ENCODE measurements at regions of chr2 and their contacts with region 1.

Region 1: DNA sequence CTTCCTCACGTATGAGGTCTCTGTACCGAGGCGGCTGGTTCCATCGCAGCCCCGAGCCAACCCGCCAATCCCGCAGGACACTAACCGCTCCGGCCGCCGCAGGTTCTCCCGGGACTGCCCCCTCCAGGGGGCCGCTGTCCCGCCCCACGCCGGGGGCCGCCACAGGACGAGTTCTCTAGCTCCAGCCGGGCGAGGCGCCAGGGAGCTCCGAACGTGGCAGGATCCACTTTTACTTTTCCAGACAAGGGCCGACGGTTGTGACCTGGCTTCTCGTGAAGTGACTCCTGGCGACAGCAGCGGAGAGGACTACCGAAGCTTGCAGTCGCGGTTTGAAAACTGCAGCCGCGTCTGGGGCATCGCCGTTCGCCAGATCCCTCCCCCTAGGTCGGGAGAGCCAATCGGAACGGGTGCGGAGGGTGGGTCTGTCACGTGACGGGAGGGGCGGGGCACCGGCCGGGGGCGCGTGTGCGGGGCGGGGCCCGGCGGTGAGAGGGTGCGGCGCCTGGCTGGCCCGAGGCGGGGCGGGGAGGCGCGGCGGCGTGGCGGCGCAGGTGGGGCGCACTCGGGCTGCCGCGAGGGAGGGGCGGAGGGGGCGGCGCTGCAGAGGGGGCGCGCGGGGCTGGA is at the start of gene STK17B:
- DNase-seq: peak; percentile 78 to 96
- H3K4me3 ChIP-seq: peak within 1 kb of the TSS; percentile 80 to 90
- H3K27ac ChIP-seq: peak within 1 kb of the TSS; percentile 82 to 85
- H3K4me1 ChIP-seq: no peaks in the 10 kb centered on the region
- H3K27me3 ChIP-seq: no peaks in the 10 kb centered on the region
- CTCF ChIP-seq: peak in 1 of 3 experiments; percentile 11
- total RNA-seq, gene STK17B: 8.4 TPM

Region 2: DNA sequence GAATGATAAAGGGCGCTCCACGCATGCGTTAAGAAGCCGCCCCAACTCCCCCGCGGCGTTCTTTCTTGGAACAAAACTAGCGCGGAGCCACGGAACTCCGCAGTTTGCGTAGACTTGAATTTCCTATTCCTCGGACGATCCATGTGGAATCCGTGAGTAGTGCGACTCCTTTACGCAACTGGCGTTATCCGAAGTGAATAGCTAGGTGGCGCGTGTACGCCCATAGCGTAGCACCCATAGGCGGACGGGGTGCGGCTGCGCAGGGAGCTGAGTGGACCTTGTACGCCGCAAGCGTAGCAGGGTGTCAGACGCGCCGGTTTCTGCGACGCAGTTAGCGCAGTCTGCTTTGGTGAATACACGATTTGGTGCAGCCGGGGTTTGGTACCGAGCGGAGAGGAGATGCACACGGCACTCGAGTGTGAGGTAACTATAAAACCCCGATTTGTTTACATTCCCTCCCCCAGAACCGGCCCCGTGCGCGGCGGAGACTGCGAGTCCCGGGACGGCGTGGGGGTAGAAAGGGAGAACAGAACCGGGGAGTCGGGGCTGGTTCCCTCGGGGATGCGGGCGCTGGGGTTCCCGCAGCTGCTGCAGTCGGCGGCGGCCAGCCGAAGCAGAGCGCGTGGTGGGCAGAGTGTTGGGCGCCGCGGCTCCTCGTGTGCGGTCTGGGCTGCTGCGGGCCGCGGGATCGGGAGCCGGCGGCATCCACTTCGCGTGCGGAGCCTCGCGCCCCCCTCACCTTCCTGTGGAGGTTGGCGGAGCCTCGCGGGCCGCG is 514.3 kb before region 1 on chr2 and contains the start of gene SLC39A10:
- intact Hi-C with region 1: loop called (anchors 5 kb)
- DNase-seq: peak; percentile 94 to 99
- H3K4me3 ChIP-seq: peak within 1 kb of the TSS; percentile 83 to 89
- H3K27ac ChIP-seq: peak within 1 kb of the TSS; percentile 97 to 98
- H3K4me1 ChIP-seq: peaks cover 0 to 9% of the 10 kb centered on the region in 2 donors
- H3K27me3 ChIP-seq: no peaks in the 10 kb centered on the region
- CTCF ChIP-seq: peak in 1 of 3 experiments; percentile 4
- total RNA-seq, gene SLC39A10: 9.9 TPM

Region 3: GRCh38 chr2:196068271-196069209 is 102.8 kb before region 1 on chr2 and contains the start of gene DNAH7:
- intact Hi-C with region 1: loop called (anchors 2 kb)
- DNase-seq: peak; percentile 59 to 92
- H3K4me3 ChIP-seq: peak within 1 kb of the TSS; percentile 73 to 88
- H3K27ac ChIP-seq: peak within 1 kb of the TSS; percentile 23 to 68
- H3K4me1 ChIP-seq: peaks cover 2 to 3% of the 10 kb centered on the region in 2 donors
- H3K27me3 ChIP-seq: no peaks in the 10 kb centered on the region
- CTCF ChIP-seq: peak in 1 of 3 experiments; percentile 69
- total RNA-seq, gene DNAH7: 0.21 TPM

Region 4: DNA sequence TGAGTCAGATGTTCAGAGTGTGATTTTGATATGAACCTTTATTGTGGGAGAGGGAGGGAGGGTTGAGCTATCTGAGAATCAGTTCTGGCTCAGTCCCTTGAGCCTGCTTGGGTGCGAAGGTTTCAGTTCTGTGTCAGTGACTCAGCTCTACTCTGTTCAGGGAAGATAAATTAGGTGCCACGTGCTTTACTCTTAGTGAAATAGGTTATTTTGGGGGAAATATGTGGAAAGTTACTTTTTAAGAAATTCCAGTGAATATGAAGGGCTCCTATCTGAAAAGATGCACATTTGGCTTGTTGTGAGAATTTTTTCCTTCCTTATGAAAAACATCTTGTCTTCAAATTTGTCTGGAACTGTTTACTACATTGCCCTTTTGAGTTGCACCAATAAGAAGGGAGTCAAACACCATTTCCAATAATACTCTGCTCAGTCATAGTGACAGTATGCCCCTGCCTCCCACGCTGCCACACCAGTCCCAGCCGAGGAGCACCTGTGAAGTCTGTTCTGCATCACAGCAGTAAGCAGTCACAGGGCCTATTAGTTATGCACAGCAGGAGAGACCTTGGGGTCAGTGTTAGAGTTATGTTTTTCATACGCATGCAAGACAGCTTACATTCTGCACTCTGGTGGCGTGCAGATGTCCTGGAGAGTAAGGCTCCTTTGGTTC is 69.9 kb before region 1 on chr2:
- intact Hi-C with region 1: no loop called
- DNase-seq: no peak
- H3K4me3 ChIP-seq: no peak overlapping the region
- H3K27ac ChIP-seq: no peak overlapping the region
- H3K4me1 ChIP-seq: no peaks in the 10 kb centered on the region
- H3K27me3 ChIP-seq: no peaks in the 10 kb centered on the region
- CTCF ChIP-seq: no peak

Region 5: GRCh38 chr2:196113061-196113974 is 58.0 kb before region 1 on chr2:
- intact Hi-C with region 1: loop called (anchors 5 kb)
- DNase-seq: no peak
- H3K4me3 ChIP-seq: peak overlapping the region; percentile 30 to 35
- H3K27ac ChIP-seq: peak overlapping the region; percentile 54 to 71
- H3K4me1 ChIP-seq: peaks cover 0 to 25% of the 10 kb centered on the region in 2 donors
- H3K27me3 ChIP-seq: no peaks in the 10 kb centered on the region
- CTCF ChIP-seq: no peak

Region 6: GRCh38 chr2:196284144-196284844 is 112.9 kb after region 1 on chr2:
- intact Hi-C with region 1: loop called (anchors 5 kb)
- DNase-seq: no peak
- H3K4me3 ChIP-seq: peak overlapping the region in 1 of 2 donors; percentile 22
- H3K27ac ChIP-seq: peak overlapping the region; percentile 35 to 63
- H3K4me1 ChIP-seq: peaks cover 0 to 5% of the 10 kb centered on the region in 2 donors
- H3K27me3 ChIP-seq: no peaks in the 10 kb centered on the region
- CTCF ChIP-seq: no peak

Region 7: DNA sequence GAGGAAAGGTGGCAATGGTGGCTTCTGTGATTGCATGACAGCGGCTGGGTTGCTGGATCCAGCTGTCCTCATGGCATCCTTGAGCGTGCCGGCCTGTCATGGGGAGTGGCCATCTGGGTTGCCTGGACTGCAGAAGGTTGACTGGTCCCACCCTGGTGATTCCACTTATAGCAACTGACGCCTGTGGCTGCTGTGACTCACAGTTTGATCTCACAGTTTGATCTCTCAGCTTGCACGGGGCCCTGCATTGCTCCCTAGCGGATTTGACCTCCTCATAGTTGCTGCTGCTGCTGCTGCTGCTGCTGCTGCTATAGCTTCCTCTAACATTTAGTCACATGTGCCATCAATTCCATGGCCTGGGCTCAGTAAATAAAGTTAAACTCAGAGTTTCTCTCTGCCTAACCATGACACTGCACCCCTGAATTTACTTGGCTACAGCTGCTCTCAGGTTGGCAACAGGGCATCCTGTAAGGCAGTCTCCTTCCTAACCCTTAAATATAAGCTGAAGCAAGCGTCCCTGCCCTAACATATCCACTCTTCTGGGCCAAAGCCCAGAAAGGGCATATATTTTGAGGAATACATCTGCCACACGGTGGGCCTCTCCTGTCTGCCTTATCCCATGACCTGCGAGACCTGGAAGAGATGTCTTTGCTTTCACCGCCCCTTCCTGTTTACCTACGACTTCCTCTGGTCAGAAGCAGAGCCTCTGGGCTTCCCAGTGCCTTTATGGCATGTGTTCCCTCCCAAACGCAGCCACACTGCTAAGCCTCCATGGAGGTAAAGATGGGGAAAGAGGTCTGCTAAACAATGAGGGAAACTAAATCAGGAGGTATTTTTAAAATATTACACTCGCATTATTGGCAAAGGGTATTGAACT is 430.3 kb after region 1 on chr2:
- intact Hi-C with region 1: loop called (anchors 5 kb)
- DNase-seq: peak; percentile 61 to 91
- H3K4me3 ChIP-seq: peak overlapping the region in 1 of 2 donors; percentile 1
- H3K27ac ChIP-seq: peak overlapping the region; percentile 84 to 85
- H3K4me1 ChIP-seq: peaks cover 5 to 11% of the 10 kb centered on the region in 2 donors
- H3K27me3 ChIP-seq: no peaks in the 10 kb centered on the region
- CTCF ChIP-seq: peak in 1 of 3 experiments; percentile 10

Region 8: DNA sequence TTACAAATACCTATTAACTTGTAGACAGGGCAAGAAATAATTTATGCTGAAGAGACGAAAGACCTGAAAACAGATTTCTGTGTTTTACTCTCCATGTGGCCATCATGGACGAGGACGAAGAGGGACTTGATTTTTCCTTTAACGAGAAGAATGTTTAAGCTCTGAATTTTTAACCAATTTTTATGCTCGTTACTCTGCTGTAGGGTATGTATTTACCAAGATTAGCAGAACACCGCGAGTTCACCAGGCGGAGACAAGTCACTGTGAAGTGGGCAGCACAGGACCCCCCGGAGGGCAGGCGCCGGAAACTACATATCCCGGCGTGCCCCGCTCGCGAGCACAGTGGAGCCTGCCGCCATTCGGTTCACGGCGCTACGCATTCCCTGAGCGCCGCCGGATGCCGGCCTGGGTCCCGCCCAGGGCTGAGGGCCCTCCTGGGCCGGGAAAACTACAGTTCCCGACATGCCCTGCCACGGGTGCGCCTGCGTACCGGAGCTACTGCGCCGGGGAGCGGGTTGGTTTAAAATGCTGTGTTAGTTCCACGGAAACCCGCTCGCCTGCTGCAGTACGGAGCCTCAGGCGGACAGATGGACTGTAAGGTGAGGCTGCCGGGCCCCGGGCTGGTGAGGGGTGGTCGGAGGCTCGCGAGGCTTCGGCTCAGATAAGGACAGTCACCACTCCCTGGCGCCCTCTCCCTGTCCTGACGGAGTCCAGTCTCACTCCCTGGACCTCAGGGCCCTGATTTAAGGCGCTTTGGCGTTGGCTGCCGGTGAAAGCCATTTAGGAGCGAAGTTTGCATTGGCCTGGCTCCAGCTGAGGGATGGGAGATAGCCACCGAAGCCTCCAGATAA is 468.0 kb after region 1 on chr2 and contains the start of gene CCDC150:
- intact Hi-C with region 1: loop called (anchors 1 kb)
- DNase-seq: peak; percentile 75 to 96
- H3K4me3 ChIP-seq: peak within 1 kb of the TSS; percentile 70 to 72
- H3K27ac ChIP-seq: no peak within 1 kb of the TSS
- H3K4me1 ChIP-seq: peaks cover 0 to 5% of the 10 kb centered on the region in 2 donors
- H3K27me3 ChIP-seq: no peaks in the 10 kb centered on the region
- CTCF ChIP-seq: peak; percentile 12 to 51 (median 21)
- total RNA-seq, gene CCDC150: 7.1 TPM